ENCODE measurements at regions of chr3 and their contacts with region 1.

Region 1: DNA sequence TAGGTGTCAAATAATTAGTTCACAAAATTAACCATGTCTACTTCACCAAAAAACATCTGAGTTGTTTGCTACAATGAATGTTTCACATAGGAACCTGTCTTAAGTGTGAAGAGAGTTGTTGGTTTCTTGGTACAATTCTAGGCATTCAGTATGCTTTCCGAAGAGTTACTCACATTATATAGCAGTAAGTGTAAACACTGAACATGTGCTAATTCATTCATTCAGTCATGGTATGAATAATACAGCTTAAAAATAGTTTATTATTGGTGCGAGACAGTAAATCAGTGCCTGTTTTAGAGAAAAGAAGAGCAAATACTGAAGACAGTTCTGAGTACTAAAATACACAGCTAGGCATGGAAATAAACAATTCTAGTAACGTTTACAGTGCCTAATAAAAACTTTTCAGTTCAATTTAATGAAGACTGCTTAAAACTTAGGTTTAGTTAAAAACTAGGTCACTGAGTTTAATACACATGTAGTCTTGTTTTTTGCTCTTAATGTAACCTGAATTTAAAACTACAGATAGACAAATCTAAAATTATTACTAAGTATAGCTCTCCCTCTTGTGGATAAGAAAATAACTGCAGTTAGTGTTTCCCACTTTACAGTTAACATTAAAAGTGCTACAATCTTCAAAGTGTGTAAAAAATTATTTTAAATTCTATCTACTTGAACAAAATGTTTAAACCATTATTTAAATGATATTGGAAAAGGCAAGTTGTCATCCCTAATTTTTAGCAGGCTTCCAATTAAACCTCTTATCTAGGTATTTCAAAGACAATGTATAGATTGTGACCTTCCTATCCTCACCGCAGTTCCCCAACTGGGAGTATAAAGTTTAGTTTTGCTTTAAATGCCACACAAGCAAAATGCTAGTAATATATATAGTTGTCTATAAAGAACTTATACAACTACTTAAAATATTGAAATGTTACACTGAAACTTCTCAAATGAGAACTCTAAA is 20.1 kb upstream of the ZCWPW2 start:
- DNase-seq: no peak
- H3K4me3 Mint-ChIP-seq: no peak overlapping the region
- H3K27ac Mint-ChIP-seq: no peak overlapping the region
- H3K4me1 Mint-ChIP-seq: peaks cover 18% of the 10 kb centered on the region
- H3K27me3 Mint-ChIP-seq: no peaks in the 10 kb centered on the region

Region 2: GRCh38 chr3:27721717-27722542 is 606.5 kb before region 1 on chr3 and contains the start of gene EOMES:
- CTCF ChIA-PET with region 1: interaction called, 65 read pairs
- POLR2A ChIA-PET with region 1: interaction called, 4 read pairs
- intact Hi-C with region 1: no loop called
- DNase-seq: peak; percentile 77
- H3K4me3 Mint-ChIP-seq: peak within 1 kb of the TSS; percentile 78
- H3K27ac Mint-ChIP-seq: no peak within 1 kb of the TSS
- H3K4me1 Mint-ChIP-seq: peaks cover 21% of the 10 kb centered on the region
- H3K27me3 Mint-ChIP-seq: peaks cover 63% of the 10 kb centered on the region
- total RNA-seq, gene EOMES: 1.4 to 1.5 TPM

Region 3: DNA sequence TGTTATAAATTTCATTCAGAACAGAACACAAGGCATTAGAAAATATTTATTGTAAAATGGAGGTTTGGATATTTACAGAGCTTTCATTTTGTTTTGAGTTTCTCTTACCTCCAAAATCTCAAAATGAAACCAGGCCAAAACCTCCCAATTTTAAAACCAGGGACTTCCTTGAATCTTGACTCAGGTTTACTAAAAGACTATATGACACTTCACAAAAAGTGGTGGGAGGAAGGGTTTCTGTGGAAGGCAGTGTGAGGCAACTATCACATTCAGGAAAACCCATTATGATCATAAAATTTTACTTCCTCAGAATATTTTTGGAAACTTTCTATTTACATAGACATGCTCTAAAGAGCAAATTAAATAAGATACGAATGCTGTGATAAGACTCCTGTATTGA is 400.6 kb before region 1 on chr3:
- CTCF ChIA-PET with region 1: interaction called, 3 read pairs
- POLR2A ChIA-PET with region 1: no interaction called
- intact Hi-C with region 1: loop called (anchors 5 kb)
- DNase-seq: no peak
- H3K4me3 Mint-ChIP-seq: no peak overlapping the region
- H3K27ac Mint-ChIP-seq: peak overlapping the region; percentile 51
- H3K4me1 Mint-ChIP-seq: peaks cover 30% of the 10 kb centered on the region
- H3K27me3 Mint-ChIP-seq: peaks cover 1% of the 10 kb centered on the region

Region 4: GRCh38 chr3:28241221-28242160 is 87.0 kb before region 1 on chr3 and contains the start of gene CMC1:
- CTCF ChIA-PET with region 1: interaction called, 4 read pairs
- POLR2A ChIA-PET with region 1: no interaction called
- intact Hi-C with region 1: loop called (anchors 1 kb)
- DNase-seq: peak; percentile 96
- H3K4me3 Mint-ChIP-seq: peak within 1 kb of the TSS; percentile 93
- H3K27ac Mint-ChIP-seq: peak within 1 kb of the TSS; percentile 94
- H3K4me1 Mint-ChIP-seq: peaks cover 38% of the 10 kb centered on the region
- H3K27me3 Mint-ChIP-seq: no peaks in the 10 kb centered on the region
- total RNA-seq, gene CMC1: 27.5 to 28.6 TPM

Region 5: DNA sequence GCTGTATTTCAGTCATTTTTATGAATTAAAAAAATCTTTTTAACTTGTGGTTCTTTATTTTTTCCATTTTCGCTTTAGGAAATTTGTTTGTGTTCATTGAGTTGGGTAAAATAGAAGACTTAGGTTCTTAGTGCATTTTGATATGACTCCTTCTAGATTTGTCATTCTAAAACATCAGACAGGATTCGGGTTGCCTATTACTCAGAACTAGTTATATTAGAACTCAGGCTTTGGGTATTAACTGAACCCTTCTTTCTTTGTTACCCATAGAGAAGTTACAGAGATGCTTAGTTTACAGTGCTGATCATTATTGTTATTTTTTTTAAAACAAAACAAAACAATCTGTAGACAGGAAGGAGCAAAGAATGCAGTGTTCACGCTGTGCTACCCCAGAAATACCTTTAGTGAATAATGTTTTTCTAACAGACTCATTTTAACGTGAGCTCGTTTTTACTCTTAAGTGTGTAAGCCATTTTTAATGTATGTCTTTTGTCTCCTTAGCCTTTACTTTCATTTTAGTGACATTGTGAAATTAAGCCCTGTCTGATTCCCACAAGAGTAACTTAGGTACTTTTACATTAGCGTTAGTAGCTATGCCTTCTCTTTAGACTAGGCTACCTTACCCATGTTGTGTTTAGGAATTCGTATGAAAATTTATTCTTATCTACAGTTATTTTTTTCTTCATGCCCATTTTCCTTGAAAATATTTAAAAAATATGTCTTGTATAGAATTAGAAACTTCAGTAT is 33.6 kb before region 1 on chr3:
- CTCF ChIA-PET with region 1: no interaction called
- POLR2A ChIA-PET with region 1: no interaction called
- intact Hi-C with region 1: no loop called
- DNase-seq: no peak
- H3K4me3 Mint-ChIP-seq: no peak overlapping the region
- H3K27ac Mint-ChIP-seq: no peak overlapping the region
- H3K4me1 Mint-ChIP-seq: peaks cover 23% of the 10 kb centered on the region
- H3K27me3 Mint-ChIP-seq: no peaks in the 10 kb centered on the region

Region 6: DNA sequence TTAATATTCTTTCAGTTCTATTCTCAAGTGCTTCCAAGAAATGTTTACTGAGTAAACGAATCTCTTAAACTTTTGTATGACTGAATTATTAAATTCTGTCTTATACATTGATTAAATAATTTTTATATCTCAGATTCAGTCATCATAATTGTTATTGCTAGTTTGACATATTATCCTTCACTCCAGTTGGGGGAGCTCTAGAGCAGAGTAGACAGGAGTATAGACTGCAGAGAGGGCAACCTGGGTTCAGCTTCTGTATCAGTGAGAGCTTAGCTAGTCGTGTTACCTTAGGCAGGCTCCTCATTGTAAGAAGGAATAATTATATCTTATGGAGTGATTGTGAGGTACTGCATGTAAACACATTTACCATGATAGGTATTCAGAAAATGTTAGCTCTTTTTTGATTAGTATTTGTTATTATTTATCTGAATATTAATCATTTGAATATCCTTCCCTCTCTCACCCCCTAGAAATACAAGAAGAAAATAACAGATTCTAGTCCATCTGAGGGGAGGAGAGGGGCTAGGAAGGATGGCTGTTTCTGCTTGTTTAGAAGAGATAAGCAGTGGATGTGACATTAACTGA is 10.9 kb before region 1 on chr3:
- CTCF ChIA-PET with region 1: interaction called, 28 read pairs
- POLR2A ChIA-PET with region 1: no interaction called
- intact Hi-C with region 1: loop called (anchors 1 kb)
- DNase-seq: no peak
- H3K4me3 Mint-ChIP-seq: no peak overlapping the region
- H3K27ac Mint-ChIP-seq: no peak overlapping the region
- H3K4me1 Mint-ChIP-seq: peaks cover 6% of the 10 kb centered on the region
- H3K27me3 Mint-ChIP-seq: no peaks in the 10 kb centered on the region

Region 7: DNA sequence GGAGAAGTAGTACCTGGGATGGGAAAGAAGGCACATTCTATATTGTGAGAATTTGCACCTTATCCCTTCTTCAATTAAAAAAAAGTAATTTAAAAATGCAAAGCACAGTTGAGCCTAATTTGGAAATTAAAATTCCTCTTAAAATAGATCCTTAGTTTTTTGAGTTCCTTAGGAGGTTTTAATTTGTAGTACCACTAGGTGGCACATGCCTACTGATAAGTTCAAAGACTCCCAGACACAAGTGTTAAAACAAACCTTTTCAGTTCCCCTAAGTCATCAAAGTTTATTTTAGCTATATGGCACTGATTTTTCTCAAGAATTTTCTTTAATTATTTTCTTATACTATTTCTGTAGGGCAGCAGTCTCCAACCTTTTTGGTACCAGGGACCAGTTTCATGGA is 147.7 kb after region 1 on chr3:
- CTCF ChIA-PET with region 1: no interaction called
- POLR2A ChIA-PET with region 1: no interaction called
- intact Hi-C with region 1: no loop called
- DNase-seq: no peak
- H3K4me3 Mint-ChIP-seq: no peak overlapping the region
- H3K27ac Mint-ChIP-seq: no peak overlapping the region
- H3K4me1 Mint-ChIP-seq: no peaks in the 10 kb centered on the region
- H3K27me3 Mint-ChIP-seq: no peaks in the 10 kb centered on the region

Region 8: GRCh38 chr3:28835751-28836150 is 507.3 kb after region 1 on chr3:
- CTCF ChIA-PET with region 1: no interaction called
- POLR2A ChIA-PET with region 1: no interaction called
- intact Hi-C with region 1: no loop called
- DNase-seq: no peak
- H3K4me3 Mint-ChIP-seq: no peak overlapping the region
- H3K27ac Mint-ChIP-seq: peak overlapping the region; percentile 23
- H3K4me1 Mint-ChIP-seq: no peaks in the 10 kb centered on the region
- H3K27me3 Mint-ChIP-seq: no peaks in the 10 kb centered on the region

Measured in activated CD4-positive, alpha-beta memory T cell treated with anti-CD3 and anti-CD28 coated beads for 36 hours (primary cell).